Naive thymus-derived CD4-positive, alpha-beta T cell (primary cell): ENCODE measurements at regions of chr6 and their contacts with region 1.

Region 1: DNA sequence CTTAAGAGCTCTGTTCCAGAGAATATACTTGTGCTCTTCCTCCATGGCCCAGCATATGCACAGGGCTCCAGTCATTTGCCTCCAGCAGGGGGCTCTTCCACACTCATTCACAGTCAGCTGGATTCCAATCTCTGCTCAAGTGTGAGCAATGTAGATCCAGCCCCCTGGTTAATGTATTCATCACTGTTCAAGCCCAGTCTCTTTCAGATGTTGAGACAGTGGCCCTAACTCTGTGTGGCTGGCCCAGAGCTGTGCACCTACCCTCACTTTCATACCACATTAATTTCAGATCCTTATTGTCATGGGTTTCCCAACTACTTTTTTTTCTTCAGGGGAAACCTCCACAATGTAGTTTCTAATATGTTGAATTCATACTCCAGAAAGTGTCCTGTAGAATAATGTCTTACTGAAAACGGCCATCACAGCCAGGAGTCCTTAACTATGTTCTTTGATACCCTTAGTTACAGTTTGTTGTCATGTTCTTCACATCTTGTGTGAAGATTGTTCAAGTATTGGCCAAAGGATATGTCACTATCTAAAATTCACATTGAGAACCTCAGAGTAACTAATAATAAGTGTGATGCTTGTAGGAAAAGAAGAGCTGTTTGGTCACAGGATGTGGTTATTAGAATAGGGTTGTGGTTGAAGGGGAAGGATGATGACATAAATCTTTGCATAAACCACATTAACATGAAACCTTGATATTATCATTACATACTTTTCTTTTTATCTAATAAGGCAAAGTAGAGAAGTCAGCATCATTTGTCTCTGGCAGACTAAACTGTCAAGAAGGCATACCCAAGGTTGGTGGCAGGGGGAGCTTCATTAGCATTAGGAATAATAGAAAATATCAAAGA is 14.4 kb upstream of the HLA-DQA1 start:
- DNase-seq: peak in 8 of 9 donors; percentile 26 to 90 (median 74)
- ATAC-seq: peak; percentile 87
- H3K4me3 ChIP-seq: peak overlapping the region; percentile 5
- H3K4me3 Mint-ChIP-seq: peak overlapping the region in 9 of 10 donors; percentile 14 to 86 (median 72)
- H3K27ac ChIP-seq: peak overlapping the region; percentile 67
- H3K27ac Mint-ChIP-seq: peak overlapping the region; percentile 62 to 97 (median 88)
- H3K4me1 ChIP-seq: peaks cover 29 to 31% of the 10 kb centered on the region in 2 donors
- H3K4me1 Mint-ChIP-seq: peaks cover 22 to 60% (median 46%) of the 10 kb centered on the region in 7 donors
- H3K27me3 ChIP-seq: no peaks in the 10 kb centered on the region
- H3K27me3 Mint-ChIP-seq: no peaks in the 10 kb centered on the region

Region 2: DNA sequence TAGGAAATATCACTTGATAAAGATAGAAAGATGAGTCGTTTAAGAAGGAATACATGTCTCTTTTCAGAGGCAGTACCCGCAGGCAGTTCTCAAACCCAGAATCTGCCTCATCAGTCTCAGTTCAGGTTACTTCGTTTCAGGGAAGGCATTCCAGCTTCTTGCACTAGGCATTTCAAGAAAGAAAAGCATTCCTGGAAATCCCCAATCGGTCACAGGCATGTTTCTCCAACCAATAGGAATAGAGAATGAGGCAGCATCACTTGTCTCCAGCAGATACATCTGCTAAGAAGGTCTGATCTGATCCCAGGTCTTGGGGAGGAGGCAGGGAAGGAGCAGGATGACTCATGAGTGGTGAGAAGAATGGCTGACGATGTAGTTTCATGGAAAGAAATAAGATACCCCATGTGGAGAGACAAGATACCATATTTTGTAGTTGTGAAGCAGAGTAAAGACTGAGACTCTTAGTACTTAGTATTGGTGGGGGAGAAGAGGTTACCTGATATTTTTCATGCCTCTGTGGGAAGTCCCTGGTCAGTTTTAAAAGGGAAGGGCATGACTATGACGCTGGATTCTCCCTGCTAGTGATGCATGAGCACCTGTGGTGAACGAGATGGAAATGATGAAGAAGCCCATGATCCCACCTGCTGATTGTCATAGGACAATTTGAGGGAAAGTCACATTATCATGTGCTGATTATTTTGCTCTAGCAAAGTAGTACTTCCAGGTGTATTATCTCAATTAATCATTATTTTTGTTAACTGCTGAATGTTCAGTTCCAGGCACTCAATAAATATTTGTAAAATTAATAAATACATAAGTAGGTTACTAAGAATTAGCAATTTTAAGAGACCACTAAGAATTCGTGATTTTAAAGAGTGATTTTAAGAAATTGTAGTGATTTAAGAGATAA is 12.8 kb before region 1 on chr6:
- CTCF ChIA-PET with region 1: no interaction called
- POLR2A ChIA-PET with region 1: interaction called, 3 read pairs
- intact Hi-C with region 1: loop called in 1 of 2 experiments (anchors 1 kb)
- DNase-seq: peak in 8 of 9 donors; percentile 36 to 66 (median 55)
- ATAC-seq: peak; percentile 96
- H3K4me3 ChIP-seq: peak overlapping the region; percentile 16
- H3K4me3 Mint-ChIP-seq: no peak overlapping the region
- H3K27ac ChIP-seq: peak overlapping the region; percentile 65
- H3K27ac Mint-ChIP-seq: no peak overlapping the region
- H3K4me1 ChIP-seq: peaks cover 0 to 6% of the 10 kb centered on the region in 2 donors
- H3K4me1 Mint-ChIP-seq: peaks cover 0 to 13% (median 4%) of the 10 kb centered on the region in 7 donors
- H3K27me3 ChIP-seq: no peaks in the 10 kb centered on the region
- H3K27me3 Mint-ChIP-seq: peaks cover 0 to 12% (median 0%) of the 10 kb centered on the region in 5 donors

Region 3: DNA sequence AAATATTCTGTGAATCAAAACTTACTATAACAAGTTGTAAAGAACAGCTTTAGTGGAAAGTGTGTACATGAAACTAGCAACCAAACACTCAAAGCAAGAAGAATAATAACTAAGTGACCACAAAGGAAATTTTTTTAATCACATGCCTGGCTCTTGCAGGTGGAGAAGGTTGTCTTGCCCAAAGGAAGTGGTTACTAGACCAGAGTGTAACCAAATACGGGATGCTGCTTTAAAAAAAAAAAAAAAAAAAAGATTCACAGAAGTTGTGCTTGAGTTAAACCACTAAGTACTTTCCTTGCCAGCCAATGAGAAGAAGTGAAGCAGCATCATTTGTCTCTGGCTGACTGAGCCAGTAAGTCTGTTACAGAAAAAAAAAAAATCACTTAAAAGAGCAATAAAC is 62.8 kb after region 1 on chr6:
- CTCF ChIA-PET with region 1: interaction called, 5 read pairs
- POLR2A ChIA-PET with region 1: no interaction called
- intact Hi-C with region 1: loop called (anchors 1 kb)
- DNase-seq: peak in 7 of 9 donors; percentile 12 to 87 (median 62)
- ATAC-seq: peak; percentile 95
- H3K4me3 ChIP-seq: no peak overlapping the region
- H3K4me3 Mint-ChIP-seq: peak overlapping the region in 9 of 10 donors; percentile 5 to 82 (median 56)
- H3K27ac ChIP-seq: no peak overlapping the region
- H3K27ac Mint-ChIP-seq: peak overlapping the region; percentile 9 to 91 (median 78)
- H3K4me1 ChIP-seq: peaks cover 14 to 17% of the 10 kb centered on the region in 2 donors
- H3K4me1 Mint-ChIP-seq: peaks cover 17 to 35% (median 27%) of the 10 kb centered on the region in 7 donors
- H3K27me3 ChIP-seq: no peaks in the 10 kb centered on the region
- H3K27me3 Mint-ChIP-seq: peaks cover 0 to 37% (median 0%) of the 10 kb centered on the region in 5 donors

Region 4: DNA sequence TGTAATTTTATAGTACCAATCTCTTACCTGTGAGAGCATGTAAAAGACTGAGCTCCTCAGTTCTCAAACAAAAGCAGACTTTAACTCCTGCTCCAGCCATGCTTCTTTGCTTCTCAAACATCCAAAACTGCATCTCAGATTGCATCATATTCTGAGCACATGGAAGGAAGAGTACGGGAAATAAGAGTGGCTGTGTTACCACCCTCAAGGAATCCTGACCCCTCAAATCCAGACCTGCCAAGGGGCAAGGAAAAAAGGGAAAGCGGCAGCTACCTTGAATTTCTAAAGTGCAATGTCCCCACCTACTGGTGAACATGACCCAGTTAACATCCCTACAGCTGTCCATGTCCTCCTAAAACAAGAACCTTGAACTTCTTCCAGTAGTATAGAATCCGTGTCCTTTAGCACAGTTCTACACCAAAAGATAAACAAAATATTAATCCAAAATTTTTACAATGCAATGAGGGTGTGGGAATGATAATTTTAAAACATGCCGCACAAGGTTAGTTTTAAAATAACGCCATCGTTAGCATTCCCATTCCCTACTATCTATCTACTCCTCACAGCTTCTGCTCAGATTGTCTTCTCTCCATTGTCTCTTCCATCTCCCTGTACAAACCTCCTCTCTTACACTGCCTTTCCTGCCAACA is 77.7 kb after region 1 on chr6:
- CTCF ChIA-PET with region 1: interaction called, 5 read pairs
- POLR2A ChIA-PET with region 1: no interaction called
- intact Hi-C with region 1: loop called in 1 of 2 experiments (anchors 1 kb)
- DNase-seq: peak in 6 of 9 donors; percentile 15 to 54 (median 38)
- ATAC-seq: peak; percentile 68
- H3K4me3 ChIP-seq: no peak overlapping the region
- H3K4me3 Mint-ChIP-seq: peak overlapping the region in 7 of 10 donors; percentile 25 to 61 (median 46)
- H3K27ac ChIP-seq: no peak overlapping the region
- H3K27ac Mint-ChIP-seq: no peak overlapping the region
- H3K4me1 ChIP-seq: no peaks in the 10 kb centered on the region
- H3K4me1 Mint-ChIP-seq: peaks cover 0 to 9% (median 5%) of the 10 kb centered on the region in 7 donors
- H3K27me3 ChIP-seq: no peaks in the 10 kb centered on the region
- H3K27me3 Mint-ChIP-seq: peaks cover 26 to 69% (median 43%) of the 10 kb centered on the region in 5 donors